Activated T-helper 1 cell treated with anti-CD3 and anti-CD28 coated beads, Interleukin-12 subunit alpha, Interleukin-12 subunit beta, Interleukin-2, Interleukin-4 antibody, amounts not matched to agents 30 ng/mL and 10 ng/mL and 1 ng/mL, durations not matched to agents 14 hours and 24 hours and 36 hours (primary cell): ENCODE measurements at regions of chr1 and their contacts with region 1.

Region 1: DNA sequence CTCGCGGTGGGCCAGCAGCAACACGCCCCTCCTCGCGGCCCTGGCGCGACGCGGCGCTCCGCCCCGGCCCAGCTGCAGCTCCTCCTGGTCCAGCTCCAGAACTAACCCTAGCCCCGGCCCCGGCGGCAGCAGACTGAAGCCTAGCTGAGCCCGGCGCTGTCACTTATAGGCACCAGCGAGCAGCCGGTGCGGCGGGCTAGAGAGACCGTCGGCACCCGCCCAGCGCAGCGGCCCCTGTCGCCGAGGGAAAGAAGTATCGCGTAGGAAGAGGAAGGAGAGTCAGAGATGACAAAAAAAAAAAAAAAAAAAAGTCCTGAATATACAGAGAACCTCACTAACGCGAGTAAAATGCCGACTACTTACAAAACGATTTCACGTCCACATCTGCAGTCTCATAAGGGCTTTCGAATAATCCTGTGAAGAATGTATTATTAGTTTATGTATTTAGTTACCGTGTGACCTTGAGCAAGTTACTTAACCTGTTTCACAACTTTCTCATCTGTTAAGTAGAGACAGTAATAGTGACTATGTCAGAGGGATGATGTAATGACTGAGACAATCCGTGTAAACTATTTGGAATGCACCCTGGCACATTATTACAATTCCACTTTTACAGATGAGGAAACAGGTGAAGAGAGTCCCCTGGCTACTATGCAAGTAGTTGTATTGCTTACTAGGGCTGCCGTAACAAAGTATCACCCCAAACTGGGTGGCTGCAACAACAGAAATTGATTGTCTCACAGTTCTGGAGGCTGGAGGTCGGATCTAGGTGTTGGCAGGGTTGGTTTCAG is at the start of gene SLC9A1:
- DNase-seq: peak; percentile 90
- H3K4me3 Mint-ChIP-seq: peak within 1 kb of the TSS; percentile 93
- H3K27ac Mint-ChIP-seq: peak within 1 kb of the TSS; percentile 93
- H3K4me1 Mint-ChIP-seq: peaks cover 47% of the 10 kb centered on the region
- H3K27me3 Mint-ChIP-seq: no peaks in the 10 kb centered on the region
- total RNA-seq, gene SLC9A1: 27.9 and 28.8 TPM in 2 replicates

Region 2: GRCh38 chr1:27102707-27103491 is 52.3 kb before region 1 on chr1:
- intact Hi-C with region 1: loop called (anchors 2 kb)
- DNase-seq: peak; percentile 69
- H3K4me3 Mint-ChIP-seq: no peak overlapping the region
- H3K27ac Mint-ChIP-seq: no peak overlapping the region
- H3K4me1 Mint-ChIP-seq: peaks cover 17% of the 10 kb centered on the region
- H3K27me3 Mint-ChIP-seq: no peaks in the 10 kb centered on the region

Region 3: DNA sequence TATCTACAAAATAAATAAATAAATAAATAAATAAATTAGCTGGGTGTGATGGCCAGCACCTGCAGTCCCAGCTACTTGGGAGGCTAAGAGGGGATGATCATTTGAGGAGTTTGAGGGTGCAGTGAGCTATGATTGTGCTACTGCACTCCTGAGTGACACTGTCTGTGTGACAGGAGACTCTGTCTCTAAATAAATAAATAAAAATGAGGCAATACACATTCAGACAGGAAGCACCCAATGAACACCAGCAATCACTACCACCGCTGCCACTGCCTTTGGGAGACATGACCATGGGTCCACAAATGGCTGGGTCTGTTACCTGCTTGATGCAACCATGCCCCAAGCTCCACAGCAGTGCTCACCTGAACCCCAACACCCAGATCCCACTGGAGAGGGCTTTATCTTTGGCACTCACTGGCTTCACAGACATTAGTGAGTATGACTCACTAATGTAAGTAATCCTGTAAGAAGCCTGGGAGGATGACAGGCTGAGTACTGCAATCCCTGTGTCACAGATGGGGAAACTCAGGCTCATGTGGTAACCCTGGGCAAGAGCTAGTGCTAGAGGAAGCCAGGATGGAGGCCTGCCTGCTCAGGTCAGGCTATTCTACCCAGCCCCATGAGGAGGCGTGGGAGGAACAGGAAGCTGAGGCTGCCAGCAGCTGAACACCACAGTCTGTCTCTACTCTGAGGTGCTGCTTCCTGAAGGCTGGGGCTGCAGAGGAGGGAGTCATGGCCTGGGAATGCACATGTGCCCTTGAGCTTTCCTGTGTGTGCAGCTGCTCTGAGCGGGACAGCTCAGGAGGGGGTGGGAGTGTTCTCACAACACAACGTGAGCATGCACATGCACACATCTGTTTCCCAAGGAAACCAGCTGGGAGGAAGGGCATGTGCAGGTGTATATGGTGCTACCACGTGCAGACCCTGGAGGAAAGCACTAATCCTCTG is 43.3 kb before region 1 on chr1:
- intact Hi-C with region 1: loop called (anchors 1 kb)
- DNase-seq: peak; percentile 61
- H3K4me3 Mint-ChIP-seq: peak overlapping the region; percentile 41
- H3K27ac Mint-ChIP-seq: peak overlapping the region; percentile 77
- H3K4me1 Mint-ChIP-seq: peaks cover 49% of the 10 kb centered on the region
- H3K27me3 Mint-ChIP-seq: no peaks in the 10 kb centered on the region

Region 4: GRCh38 chr1:27136998-27137542 is 18.1 kb before region 1 on chr1:
- intact Hi-C with region 1: loop called (anchors 1 kb)
- DNase-seq: peak; percentile 71
- H3K4me3 Mint-ChIP-seq: peak overlapping the region; percentile 84
- H3K27ac Mint-ChIP-seq: peak overlapping the region; percentile 99
- H3K4me1 Mint-ChIP-seq: peaks cover 57% of the 10 kb centered on the region
- H3K27me3 Mint-ChIP-seq: no peaks in the 10 kb centered on the region

Region 5: DNA sequence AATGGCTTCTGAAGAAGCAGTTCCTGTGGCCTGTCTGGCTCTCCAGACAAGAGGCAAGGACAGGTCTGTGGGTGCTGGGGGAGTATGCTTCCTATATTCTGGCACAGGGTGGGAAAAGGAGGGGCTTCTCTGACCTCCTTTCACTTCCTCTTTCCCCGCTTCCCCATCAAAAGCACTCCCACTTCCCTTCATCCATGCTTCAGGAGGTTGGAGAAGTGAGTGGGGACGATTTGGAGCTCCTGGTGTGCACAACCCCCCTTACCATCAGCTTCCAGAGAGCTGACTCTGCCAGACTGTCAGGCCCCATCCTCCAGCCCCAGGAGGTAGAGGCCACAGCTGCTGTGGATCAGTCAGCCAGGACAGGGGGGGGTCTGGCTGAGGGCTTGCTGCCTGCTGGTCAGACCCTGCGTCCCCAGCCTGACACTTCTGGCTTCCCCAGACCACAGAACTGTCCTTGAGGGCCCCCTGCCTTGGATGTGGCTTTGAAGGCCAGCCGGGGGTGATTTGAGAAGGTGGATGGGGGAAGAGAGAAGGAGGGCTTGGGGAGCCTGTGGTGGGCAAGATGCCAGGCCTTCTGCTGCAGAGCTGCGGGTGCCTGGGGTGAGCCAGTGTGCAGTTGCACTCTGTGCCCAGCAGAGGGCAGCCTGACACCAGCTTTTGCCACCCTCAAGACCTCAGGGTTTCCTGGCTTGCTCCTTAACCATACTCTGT is 145.3 kb after region 1 on chr1:
- intact Hi-C with region 1: no loop called
- DNase-seq: peak; percentile 61
- H3K4me3 Mint-ChIP-seq: no peak overlapping the region
- H3K27ac Mint-ChIP-seq: no peak overlapping the region
- H3K4me1 Mint-ChIP-seq: peaks cover 4% of the 10 kb centered on the region
- H3K27me3 Mint-ChIP-seq: no peaks in the 10 kb centered on the region

Region 6: DNA sequence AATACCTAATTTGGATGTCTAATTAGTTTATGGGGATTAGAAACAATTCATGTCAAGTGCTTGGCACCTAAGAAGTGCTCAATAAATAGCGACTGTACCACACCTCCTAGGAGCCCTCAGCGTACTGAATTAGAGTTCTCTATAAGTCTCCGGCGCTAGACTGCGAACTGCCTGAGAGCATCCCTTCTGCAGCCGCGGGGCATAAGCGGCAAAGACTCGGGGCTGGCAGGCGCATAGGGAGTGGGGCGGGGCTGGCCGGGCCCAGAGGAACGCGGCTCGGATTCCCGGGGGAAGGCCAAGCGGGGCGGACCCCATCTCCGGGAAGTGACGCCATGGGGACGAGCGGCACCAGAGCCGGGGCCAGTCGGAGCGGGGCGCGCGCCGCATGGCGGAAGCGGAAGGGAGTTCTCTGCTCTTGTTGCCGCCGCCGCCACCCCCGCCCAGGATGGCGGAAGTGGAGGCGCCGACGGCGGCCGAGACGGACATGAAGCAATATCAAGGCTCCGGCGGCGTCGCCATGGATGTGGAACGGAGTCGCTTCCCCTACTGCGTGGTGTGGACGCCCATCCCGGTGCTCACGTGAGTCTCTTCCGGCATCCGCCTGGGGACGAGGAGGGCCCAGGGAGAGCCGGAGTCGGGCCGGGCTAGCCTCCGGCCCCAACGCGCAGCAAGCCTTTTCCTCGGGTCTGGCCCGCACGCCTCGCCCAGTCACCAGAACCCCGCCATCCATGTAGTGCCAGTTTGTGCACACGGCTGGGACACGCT is 166.8 kb after region 1 on chr1 and contains the start of gene TMEM222:
- intact Hi-C with region 1: loop called (anchors 1 kb)
- DNase-seq: peak; percentile 98
- H3K4me3 Mint-ChIP-seq: peak within 1 kb of the TSS; percentile 97
- H3K27ac Mint-ChIP-seq: peak within 1 kb of the TSS; percentile 90
- H3K4me1 Mint-ChIP-seq: peaks cover 33% of the 10 kb centered on the region
- H3K27me3 Mint-ChIP-seq: no peaks in the 10 kb centered on the region
- total RNA-seq, gene TMEM222: 44.3 and 47.4 TPM in 2 replicates